ENCODE measurements at regions of chr7 and their contacts with region 1.

Region 1: GRCh38 chr7:7681179-7681935 is 37.0 kb downstream of the RPA3 start:
- DNase-seq: peak; percentile 22
- CTCF ChIP-seq: peak; percentile 47

Region 2: GRCh38 chr7:7693881-7694280 is 12.5 kb after region 1 on chr7:
- CTCF ChIA-PET with region 1: interaction called, 40 read pairs
- POLR2A ChIA-PET with region 1: no interaction called
- DNase-seq: no peak
- CTCF ChIP-seq: no peak

Region 3: DNA sequence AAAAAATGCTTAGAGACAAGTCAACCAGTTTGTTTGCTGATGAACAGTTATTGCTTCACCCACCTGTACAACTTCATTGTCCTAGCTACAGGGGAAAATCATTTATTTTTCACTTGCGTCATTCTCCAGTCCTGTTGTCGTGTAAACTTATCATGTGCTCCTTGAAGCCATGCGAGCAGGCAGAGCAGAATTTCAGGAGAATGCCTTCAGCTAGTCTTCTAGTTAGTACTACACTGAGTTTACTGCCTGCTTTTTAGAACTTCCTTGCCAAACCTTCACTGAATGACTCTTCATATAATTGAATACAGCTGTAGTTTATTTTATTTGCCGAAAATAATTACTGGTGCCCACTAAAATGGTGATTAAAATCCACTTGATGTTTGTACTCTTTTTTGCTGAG is 21.5 kb after region 1 on chr7:
- CTCF ChIA-PET with region 1: interaction called, 19 read pairs
- POLR2A ChIA-PET with region 1: no interaction called
- DNase-seq: no peak
- CTCF ChIP-seq: no peak

Region 4: GRCh38 chr7:7761340-7761980 is 80.1 kb after region 1 on chr7:
- CTCF ChIA-PET with region 1: interaction called, 32 read pairs
- POLR2A ChIA-PET with region 1: no interaction called
- DNase-seq: no peak
- CTCF ChIP-seq: peak; percentile 33

Region 5: GRCh38 chr7:7779878-7780277 is 98.5 kb after region 1 on chr7:
- CTCF ChIA-PET with region 1: no interaction called
- POLR2A ChIA-PET with region 1: no interaction called
- DNase-seq: no peak
- CTCF ChIP-seq: no peak

Region 6: GRCh38 chr7:7884855-7885254 is 203.5 kb after region 1 on chr7:
- CTCF ChIA-PET with region 1: no interaction called
- POLR2A ChIA-PET with region 1: no interaction called
- DNase-seq: no peak
- CTCF ChIP-seq: no peak

Region 7: DNA sequence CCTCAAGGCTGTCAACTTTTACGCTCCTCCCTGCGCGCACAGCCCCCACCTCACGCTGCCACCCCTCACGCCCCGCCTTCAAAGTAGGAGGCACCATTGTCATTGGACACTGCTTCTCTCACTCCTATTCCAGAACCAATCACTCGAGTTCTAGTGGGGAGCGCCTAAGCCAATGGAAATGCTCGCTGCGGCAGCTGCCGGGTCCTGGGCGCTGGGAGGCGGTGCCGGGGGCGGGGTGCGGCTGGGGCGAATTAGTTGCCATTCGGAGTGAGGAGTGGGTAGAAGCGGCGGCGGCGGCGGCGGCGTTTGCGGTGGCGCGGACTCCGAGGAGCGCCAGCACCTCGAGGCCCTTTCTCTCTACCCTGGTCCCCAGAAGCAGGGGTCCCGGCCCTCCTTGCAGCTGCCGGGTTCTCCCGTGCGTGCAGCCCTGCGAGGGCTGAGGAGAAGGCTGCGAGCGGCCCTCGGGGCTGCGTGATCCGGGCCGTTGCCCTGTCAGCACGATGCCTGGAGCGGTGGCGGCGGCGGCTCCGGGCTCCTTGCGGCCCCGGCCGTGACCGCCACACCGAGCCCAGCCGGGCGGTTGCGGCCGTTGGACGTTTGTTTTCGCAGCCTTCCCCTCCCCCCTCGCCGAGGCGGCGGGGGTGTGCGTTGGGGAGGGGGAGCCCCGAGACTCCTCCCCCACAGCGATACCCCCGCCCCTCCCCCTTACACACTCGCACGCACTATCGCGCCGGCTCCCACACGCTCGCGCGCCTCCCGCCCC is 287.4 kb after region 1 on chr7 and contains the start of gene GLCCI1:
- CTCF ChIA-PET with region 1: interaction called, 12 read pairs
- POLR2A ChIA-PET with region 1: no interaction called
- DNase-seq: peak; percentile 94
- CTCF ChIP-seq: no peak

Region 8: GRCh38 chr7:8190119-8190895 is 508.9 kb after region 1 on chr7:
- CTCF ChIA-PET with region 1: interaction called, 17 read pairs
- POLR2A ChIA-PET with region 1: no interaction called
- DNase-seq: peak; percentile 55
- CTCF ChIP-seq: peak; percentile 60

Region 9: DNA sequence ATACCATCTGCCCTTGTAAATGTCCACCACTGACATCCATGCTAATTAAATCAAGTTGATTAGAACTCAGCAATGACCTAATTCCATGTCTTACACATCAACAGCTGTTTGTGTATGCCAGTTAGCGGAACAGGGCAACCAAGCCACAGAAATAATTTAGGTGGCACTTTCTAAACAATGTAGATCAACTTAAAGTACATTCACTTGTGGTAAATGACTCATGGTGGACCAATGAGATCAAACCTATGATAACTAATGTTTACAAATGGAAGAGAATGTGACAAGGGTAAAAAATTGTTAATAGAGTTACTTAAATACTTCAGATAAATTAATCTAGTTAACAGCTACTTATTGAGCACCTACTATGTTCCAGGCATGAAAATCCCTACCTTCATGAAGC is 643.7 kb after region 1 on chr7:
- CTCF ChIA-PET with region 1: no interaction called
- POLR2A ChIA-PET with region 1: no interaction called
- DNase-seq: no peak
- CTCF ChIP-seq: no peak

Measured in GM10248 (cell line).